Breast epithelium (tissue), 4 donors: ENCODE measurements at regions of chrX and their contacts with region 1.

Region 1: DNA sequence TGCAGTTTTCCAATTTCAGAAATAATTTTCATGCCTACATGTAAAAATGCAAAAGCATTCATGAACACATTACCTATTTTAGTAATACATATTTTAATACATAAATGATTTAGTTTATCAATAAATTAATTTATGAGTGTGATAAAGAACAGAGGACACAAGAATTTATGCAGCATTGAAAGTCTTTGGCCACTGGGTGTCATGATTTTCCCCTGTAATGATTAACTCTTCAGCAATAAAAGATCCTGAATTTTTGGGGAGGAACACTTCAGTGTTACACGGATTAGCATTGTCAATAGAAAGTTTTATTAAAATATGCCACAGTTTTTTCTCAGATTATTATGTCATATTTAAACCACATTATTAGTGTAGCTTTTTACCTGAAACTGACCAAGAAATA is 8.6 kb upstream of the VCX2 start:
- DNase-seq: no peak
- H3K4me3 ChIP-seq: no peak overlapping the region
- H3K27ac ChIP-seq: no peak overlapping the region
- H3K4me1 ChIP-seq: no peaks in the 10 kb centered on the region
- H3K27me3 ChIP-seq: no peaks in the 10 kb centered on the region
- CTCF ChIP-seq: no peak
- POLR2A ChIP-seq: no peak

Region 2: DNA sequence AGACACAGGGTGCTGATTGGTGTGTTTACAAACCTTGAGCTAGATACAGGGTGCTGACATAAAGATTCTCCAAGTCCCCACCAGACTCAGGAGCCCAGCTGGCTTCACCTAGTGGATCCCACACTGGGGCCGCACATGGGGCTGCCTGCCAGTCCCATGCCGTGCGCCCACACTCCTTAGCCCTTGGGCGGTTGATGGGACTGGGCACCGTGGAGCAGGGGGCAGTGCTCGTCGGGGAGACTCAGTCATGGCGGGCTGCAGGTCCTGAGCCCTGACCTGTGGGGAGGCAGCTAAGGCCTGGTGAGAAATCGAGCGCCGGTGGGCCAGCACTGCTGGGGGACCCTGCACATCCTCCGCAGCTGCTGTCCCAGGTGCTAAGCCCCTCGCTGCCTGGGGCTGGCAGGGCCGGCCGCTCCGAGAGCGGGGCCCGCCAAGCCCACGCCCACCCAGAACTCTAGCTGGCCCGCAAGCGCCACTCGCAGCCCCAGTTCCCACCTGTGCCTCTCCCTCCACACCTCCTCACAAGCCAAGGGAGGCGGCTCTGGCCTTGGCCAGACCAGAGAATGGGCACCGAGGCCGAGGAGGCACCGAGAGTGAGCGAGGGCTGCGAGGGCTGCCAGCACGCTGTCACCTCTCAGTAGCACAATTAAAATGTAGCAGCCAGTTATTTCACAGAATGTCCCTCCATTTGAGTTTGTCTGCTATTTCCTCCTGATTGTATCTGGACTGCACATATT is 176.3 kb before region 1 on chrX:
- intact Hi-C with region 1: loop called (anchors 5 kb)
- DNase-seq: no peak
- H3K4me3 ChIP-seq: no peak overlapping the region
- H3K27ac ChIP-seq: no peak overlapping the region
- H3K4me1 ChIP-seq: no peaks in the 10 kb centered on the region
- H3K27me3 ChIP-seq: no peaks in the 10 kb centered on the region
- CTCF ChIP-seq: no peak
- POLR2A ChIP-seq: no peak

Region 3: GRCh38 chrX:8235026-8235425 is 55.4 kb after region 1 on chrX:
- intact Hi-C with region 1: no loop called
- DNase-seq: no peak
- H3K4me3 ChIP-seq: no peak overlapping the region
- H3K27ac ChIP-seq: no peak overlapping the region
- H3K4me1 ChIP-seq: no peaks in the 10 kb centered on the region
- H3K27me3 ChIP-seq: no peaks in the 10 kb centered on the region
- CTCF ChIP-seq: no peak
- POLR2A ChIP-seq: no peak

Region 4: DNA sequence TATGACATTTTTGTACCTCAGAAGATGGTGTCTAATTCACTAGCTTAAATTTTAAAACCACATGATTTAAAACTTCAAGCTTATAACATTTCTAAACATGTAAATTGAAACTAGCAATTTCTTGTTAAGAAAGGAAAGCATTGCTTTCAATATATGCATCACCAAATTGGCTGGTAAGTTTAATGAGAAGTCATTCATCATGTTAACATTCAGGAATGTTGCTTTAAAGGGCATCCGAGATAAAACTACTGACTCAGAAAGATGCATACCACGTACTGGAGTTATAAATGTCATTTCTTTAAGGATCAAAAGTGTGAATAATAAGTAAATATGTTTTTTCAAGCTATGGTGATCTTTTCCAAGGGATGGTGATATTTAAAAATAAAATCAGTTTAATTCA is 74.7 kb after region 1 on chrX:
- intact Hi-C with region 1: no loop called
- DNase-seq: no peak
- H3K4me3 ChIP-seq: no peak overlapping the region
- H3K27ac ChIP-seq: no peak overlapping the region
- H3K4me1 ChIP-seq: no peaks in the 10 kb centered on the region
- H3K27me3 ChIP-seq: no peaks in the 10 kb centered on the region
- CTCF ChIP-seq: no peak
- POLR2A ChIP-seq: no peak

Region 5: GRCh38 chrX:8639949-8640475 is 460.4 kb after region 1 on chrX:
- intact Hi-C with region 1: no loop called
- DNase-seq: no peak
- H3K4me3 ChIP-seq: no peak overlapping the region
- H3K27ac ChIP-seq: no peak overlapping the region
- H3K4me1 ChIP-seq: no peaks in the 10 kb centered on the region
- H3K27me3 ChIP-seq: no peaks in the 10 kb centered on the region
- CTCF ChIP-seq: no peak
- POLR2A ChIP-seq: no peak

Region 6: GRCh38 chrX:9141496-9141895 is 961.8 kb after region 1 on chrX:
- intact Hi-C with region 1: no loop called
- DNase-seq: no peak
- H3K4me3 ChIP-seq: no peak overlapping the region
- H3K27ac ChIP-seq: no peak overlapping the region
- H3K4me1 ChIP-seq: no peaks in the 10 kb centered on the region
- H3K27me3 ChIP-seq: peaks cover 0 to 11% of the 10 kb centered on the region in 2 donors
- CTCF ChIP-seq: no peak
- POLR2A ChIP-seq: no peak